AG04450 (cell line): ENCODE measurements at regions of chr7 and their contacts with region 1.

Region 1: GRCh38 chr7:20858951-20859350 is 72.3 kb upstream of the SP8 start:
- DNase-seq: no peak
- H3K4me3 ChIP-seq: no peak overlapping the region
- H3K27ac ChIP-seq: no peak overlapping the region
- H3K27me3 ChIP-seq: no peaks in the 10 kb centered on the region
- CTCF ChIP-seq: no peak

Region 2: GRCh38 chr7:20954711-20955619 is 96.0 kb after region 1 on chr7:
- CTCF ChIA-PET with region 1: no interaction called
- POLR2A ChIA-PET with region 1: no interaction called
- DNase-seq: no peak
- H3K4me3 ChIP-seq: no peak overlapping the region
- H3K27ac ChIP-seq: no peak overlapping the region
- H3K27me3 ChIP-seq: no peaks in the 10 kb centered on the region
- CTCF ChIP-seq: no peak

Region 3: GRCh38 chr7:21092766-21093702 is 234.1 kb after region 1 on chr7:
- CTCF ChIA-PET with region 1: interaction called, 12 read pairs
- POLR2A ChIA-PET with region 1: no interaction called
- DNase-seq: no peak
- H3K4me3 ChIP-seq: no peak overlapping the region
- H3K27ac ChIP-seq: no peak overlapping the region
- H3K27me3 ChIP-seq: no peaks in the 10 kb centered on the region
- CTCF ChIP-seq: no peak

Region 4: DNA sequence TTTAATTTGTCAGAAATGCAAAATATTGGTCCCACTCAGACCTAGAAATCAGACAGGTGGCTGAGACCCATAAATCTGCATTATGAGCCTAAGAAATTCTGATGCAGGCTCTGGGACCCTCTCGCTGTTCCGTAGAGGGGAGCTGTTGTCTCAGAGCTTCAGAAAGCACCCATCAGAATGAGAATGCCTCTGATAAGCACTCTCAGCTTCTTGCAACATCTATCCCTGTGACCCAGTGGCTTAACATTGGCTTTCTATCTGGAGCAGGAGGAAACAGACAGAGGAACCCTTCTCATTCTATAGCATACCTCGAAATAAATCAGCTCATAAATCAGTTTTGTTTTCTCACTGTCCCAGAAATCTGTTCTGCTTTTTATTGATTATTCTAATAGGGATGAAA is 384.3 kb after region 1 on chr7:
- CTCF ChIA-PET with region 1: no interaction called
- POLR2A ChIA-PET with region 1: no interaction called
- DNase-seq: no peak
- H3K4me3 ChIP-seq: no peak overlapping the region
- H3K27ac ChIP-seq: no peak overlapping the region
- H3K27me3 ChIP-seq: no peaks in the 10 kb centered on the region
- CTCF ChIP-seq: no peak